PC-3 (cell line): ENCODE measurements at regions of chr3 and their contacts with region 1.

Region 1: DNA sequence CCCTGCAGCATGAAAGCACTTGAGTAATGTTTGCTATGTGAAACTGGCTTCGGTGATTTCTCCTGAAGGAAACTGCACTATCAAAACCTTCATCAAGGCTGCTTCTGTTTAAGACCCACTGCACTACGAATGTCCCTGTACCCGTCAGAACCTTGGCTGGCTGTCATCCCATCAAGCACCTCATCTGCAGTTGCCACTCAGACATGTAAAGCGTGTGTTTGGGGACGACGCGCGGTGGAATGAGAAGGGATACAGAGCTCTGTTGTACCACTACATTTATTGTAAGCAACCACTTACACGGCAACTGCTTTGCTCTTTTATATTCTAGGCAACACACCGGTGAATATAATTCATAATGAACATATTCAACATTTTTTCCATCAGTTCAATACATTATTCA is 147.6 kb downstream of the TIGIT start:
- DNase-seq: no peak
- ATAC-seq: no peak
- H3K4me3 ChIP-seq: no peak overlapping the region
- H3K27ac ChIP-seq: no peak overlapping the region
- H3K4me1 ChIP-seq: no peaks in the 10 kb centered on the region
- H3K27me3 ChIP-seq: no peaks in the 10 kb centered on the region
- CTCF ChIP-seq: no peak

Region 2: DNA sequence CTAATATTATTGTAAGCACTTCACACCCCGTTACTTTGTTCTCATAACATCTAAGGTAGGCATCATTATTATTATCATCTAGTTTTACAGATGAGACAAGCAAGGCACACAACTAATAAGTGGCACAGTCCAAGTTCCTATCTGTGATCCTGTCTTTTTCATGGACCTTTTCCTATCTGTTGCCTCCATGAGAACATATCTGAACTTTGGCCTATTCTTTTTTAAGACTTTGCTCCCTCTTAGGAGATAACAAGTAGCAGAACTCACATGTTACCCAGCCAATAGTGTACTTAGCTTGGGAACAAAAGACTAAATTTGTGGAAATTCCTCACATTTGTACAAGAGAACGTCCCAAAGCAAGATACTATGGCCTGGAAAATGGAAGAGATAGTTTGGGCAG is 24.9 kb after region 1 on chr3:
- CTCF ChIA-PET with region 1: no interaction called
- POLR2A ChIA-PET with region 1: no interaction called
- intact Hi-C with region 1: no loop called
- DNase-seq: no peak
- ATAC-seq: no peak
- H3K4me3 ChIP-seq: no peak overlapping the region
- H3K27ac ChIP-seq: no peak overlapping the region
- H3K4me1 ChIP-seq: no peaks in the 10 kb centered on the region
- H3K27me3 ChIP-seq: no peaks in the 10 kb centered on the region
- CTCF ChIP-seq: no peak

Region 3: DNA sequence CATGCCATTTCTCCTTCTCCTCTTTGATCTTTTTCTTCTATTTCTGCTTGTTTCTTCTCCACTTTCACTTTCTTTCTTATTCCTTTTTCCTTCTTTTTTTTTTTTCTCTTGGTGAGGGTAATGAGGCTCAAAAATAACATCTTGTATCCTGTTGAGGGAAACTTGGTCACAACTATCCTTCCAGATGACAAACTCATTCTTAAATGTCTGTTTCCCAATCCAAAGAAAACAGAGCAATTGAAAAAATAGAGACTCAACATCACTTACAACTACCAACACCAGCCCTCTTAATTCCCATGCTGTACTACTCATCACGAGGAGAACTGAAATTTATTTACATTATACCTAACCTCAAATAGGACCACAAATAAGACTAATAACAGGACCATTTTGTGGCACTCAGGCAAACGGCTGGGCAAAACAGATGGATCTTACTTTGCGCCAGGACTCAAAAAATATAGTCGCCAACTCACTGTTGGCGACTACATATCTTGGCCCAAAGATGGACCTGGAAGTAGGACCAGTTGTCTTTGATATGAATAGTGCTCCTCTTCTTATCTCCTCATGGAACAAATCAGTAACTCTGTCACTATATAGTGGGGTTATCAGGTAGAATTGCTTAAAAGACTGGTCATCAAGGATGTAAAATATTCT is 361.8 kb after region 1 on chr3:
- CTCF ChIA-PET with region 1: interaction called, 10 read pairs
- POLR2A ChIA-PET with region 1: no interaction called
- intact Hi-C with region 1: no loop called
- DNase-seq: no peak
- ATAC-seq: no peak
- H3K4me3 ChIP-seq: no peak overlapping the region
- H3K27ac ChIP-seq: no peak overlapping the region
- H3K4me1 ChIP-seq: no peaks in the 10 kb centered on the region
- H3K27me3 ChIP-seq: no peaks in the 10 kb centered on the region
- CTCF ChIP-seq: no peak